ENCODE measurements at regions of chr10 and their contacts with region 1.

Region 1: GRCh38 chr10:32346134-32346550 is 816 bp downstream of the EPC1 start:
- DNase-seq: peak; percentile 98
- ATAC-seq: peak; percentile 88
- H3K4me3 Mint-ChIP-seq: peak overlapping the region; percentile 84
- H3K27ac Mint-ChIP-seq: peak overlapping the region; percentile 99
- H3K4me1 Mint-ChIP-seq: peaks cover 71% of the 10 kb centered on the region
- H3K27me3 Mint-ChIP-seq: no peaks in the 10 kb centered on the region

Region 2: DNA sequence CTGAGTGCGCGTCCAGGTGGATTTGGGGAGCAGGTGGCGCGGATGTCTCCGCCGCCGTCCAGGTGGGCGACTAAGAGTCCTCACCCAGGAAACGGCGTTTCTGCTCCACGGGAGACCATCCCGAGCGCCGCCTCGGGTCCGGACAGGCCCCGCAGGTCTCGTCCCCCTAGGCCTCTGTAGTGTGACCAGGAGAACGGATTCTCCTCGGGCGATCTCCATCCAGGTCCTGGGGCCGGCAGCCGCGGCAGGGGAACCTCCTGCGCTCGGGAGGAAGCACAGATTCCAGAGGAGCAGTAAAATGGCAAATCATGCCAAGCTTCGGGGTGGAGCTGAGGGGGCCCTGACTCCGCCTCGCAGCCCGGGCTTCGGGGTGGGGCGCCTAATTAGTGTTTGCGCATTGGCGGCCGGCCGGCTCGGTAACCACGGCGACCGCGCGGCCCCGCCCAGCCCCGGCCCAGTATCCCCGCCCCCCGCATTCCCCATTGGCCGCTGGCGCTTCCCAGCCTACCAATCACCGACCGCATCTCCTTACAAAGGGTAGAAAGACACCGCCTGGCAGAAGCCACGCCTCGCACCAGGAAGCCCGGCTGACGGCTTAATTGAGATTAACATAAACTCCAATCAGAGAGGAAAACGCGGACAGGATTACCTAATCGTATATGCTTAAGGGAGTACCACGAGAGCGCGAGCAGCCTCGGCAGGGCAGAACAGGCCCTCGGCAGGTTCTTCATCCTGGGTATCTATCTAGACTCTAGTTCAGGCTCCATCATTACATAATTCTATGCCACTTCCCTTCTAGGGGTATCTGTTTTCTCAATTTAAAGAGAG is 586.1 kb before region 1 on chr10:
- CTCF ChIA-PET with region 1: no interaction called
- POLR2A ChIA-PET with region 1: no interaction called
- intact Hi-C with region 1: loop called in 1 of 2 experiments (anchors 10 kb)
- DNase-seq: peak; percentile 97
- ATAC-seq: peak; percentile 94
- H3K4me3 Mint-ChIP-seq: peak overlapping the region; percentile 91
- H3K27ac Mint-ChIP-seq: peak overlapping the region; percentile 94
- H3K4me1 Mint-ChIP-seq: peaks cover 15% of the 10 kb centered on the region
- H3K27me3 Mint-ChIP-seq: no peaks in the 10 kb centered on the region

Region 3: GRCh38 chr10:32190890-32191491 is 155.2 kb before region 1 on chr10:
- CTCF ChIA-PET with region 1: no interaction called
- POLR2A ChIA-PET with region 1: no interaction called
- intact Hi-C with region 1: loop called (anchors 1 to 2 kb)
- DNase-seq: no peak
- ATAC-seq: no peak
- H3K4me3 Mint-ChIP-seq: no peak overlapping the region
- H3K27ac Mint-ChIP-seq: no peak overlapping the region
- H3K4me1 Mint-ChIP-seq: peaks cover 2% of the 10 kb centered on the region
- H3K27me3 Mint-ChIP-seq: no peaks in the 10 kb centered on the region

Region 4: DNA sequence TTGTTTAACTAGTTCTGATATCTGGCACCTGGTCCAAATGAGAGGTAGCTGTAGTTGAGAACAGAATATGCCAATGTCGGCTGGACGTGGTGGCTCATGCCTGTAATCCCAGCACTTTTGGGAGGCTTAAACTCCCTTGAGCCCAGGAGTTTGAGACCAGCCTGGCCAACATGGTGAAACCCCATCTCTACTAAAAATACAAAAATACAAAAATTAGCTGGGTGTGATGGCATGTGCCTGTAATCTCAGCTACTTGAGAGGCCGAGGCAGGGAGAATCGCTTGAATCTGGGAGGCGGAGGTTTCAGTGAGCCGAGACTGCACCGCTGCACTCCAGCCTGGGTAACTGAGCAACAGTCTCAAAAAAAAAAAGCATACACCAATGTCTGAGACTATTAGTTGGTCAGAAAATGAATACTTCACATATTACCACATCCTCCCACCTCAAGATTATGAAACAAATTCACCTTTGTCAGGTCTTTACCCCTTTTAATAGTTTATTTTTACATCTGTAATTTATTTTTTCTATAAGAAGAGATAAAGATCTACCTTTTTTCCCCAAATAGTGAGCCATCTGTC is 38.0 kb before region 1 on chr10:
- CTCF ChIA-PET with region 1: interaction called, 3 read pairs
- POLR2A ChIA-PET with region 1: no interaction called
- intact Hi-C with region 1: loop called in 1 of 2 experiments (anchors 5 kb)
- DNase-seq: peak; percentile 32
- ATAC-seq: peak; percentile 67
- H3K4me3 Mint-ChIP-seq: peak overlapping the region; percentile 15
- H3K27ac Mint-ChIP-seq: peak overlapping the region; percentile 62
- H3K4me1 Mint-ChIP-seq: peaks cover 64% of the 10 kb centered on the region
- H3K27me3 Mint-ChIP-seq: no peaks in the 10 kb centered on the region

Region 5: GRCh38 chr10:32332299-32332750 is 13.8 kb before region 1 on chr10:
- CTCF ChIA-PET with region 1: interaction called, 19 read pairs
- POLR2A ChIA-PET with region 1: interaction called, 4 read pairs
- intact Hi-C with region 1: loop called (anchors 1 kb)
- DNase-seq: peak; percentile 87
- ATAC-seq: peak; percentile 95
- H3K4me3 Mint-ChIP-seq: peak overlapping the region; percentile 75
- H3K27ac Mint-ChIP-seq: peak overlapping the region; percentile 98
- H3K4me1 Mint-ChIP-seq: peaks cover 96% of the 10 kb centered on the region
- H3K27me3 Mint-ChIP-seq: no peaks in the 10 kb centered on the region

Region 6: DNA sequence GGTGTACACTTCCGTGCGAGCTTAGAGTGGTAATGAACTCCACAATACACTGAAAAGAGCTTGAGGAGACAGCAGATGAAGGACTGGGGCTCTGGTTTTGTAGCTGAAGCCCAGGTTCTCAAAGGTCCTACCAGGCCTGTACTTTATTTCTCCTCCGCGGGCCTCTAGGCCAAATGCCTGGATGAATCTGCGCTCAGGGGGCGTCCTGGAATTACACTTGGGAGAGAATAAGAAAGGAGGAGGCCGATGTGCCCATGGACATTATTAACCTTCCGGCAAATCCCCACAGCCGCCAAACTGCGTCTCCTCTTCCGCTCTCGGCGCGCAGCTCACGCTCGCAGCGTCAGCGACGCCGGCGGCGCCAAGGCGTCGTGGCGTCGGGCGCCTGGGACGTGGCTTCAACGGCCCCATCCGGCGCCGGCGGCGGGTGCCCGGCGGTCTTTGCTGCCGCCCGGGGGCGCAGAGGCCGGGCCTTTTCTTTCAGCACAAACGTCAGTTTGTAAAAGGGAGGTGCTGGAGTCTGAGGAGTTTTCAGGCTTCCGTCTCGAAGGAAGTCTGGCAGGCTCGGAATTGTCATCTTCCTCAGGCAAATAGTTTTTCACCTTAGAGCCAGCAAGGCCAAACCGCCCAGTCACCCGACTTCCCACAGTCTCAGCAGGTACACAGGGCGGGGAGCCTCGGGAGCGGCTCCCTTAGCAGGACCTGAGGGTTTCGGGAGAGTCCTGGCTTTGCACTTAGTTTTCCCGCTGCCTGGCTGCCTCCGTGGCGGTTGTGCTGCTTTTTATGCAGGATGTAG is 99.8 kb after region 1 on chr10 and contains the start of gene CCDC7:
- CTCF ChIA-PET with region 1: interaction called, 5 read pairs
- POLR2A ChIA-PET with region 1: no interaction called
- intact Hi-C with region 1: loop called in 1 of 2 experiments (anchors 1 kb)
- DNase-seq: peak; percentile 91
- ATAC-seq: peak; percentile 97
- H3K4me3 Mint-ChIP-seq: peak within 1 kb of the TSS; percentile 82
- H3K27ac Mint-ChIP-seq: peak within 1 kb of the TSS; percentile 99
- H3K4me1 Mint-ChIP-seq: peaks cover 10% of the 10 kb centered on the region
- H3K27me3 Mint-ChIP-seq: no peaks in the 10 kb centered on the region
- total RNA-seq, gene CCDC7: 9.0 TPM